Endothelial cell of umbilical vein (primary cell): ENCODE measurements at regions of chr13 and their contacts with region 1.

Region 1: GRCh38 chr13:27953676-27954405 is 15.3 kb downstream of the CDX2 start:
- DNase-seq: peak; percentile 64
- H3K4me3 ChIP-seq: peak overlapping the region; percentile 27 to 52 (median 32)
- H3K27ac ChIP-seq: no peak overlapping the region
- H3K4me1 ChIP-seq: peaks cover 15% of the 10 kb centered on the region
- H3K27me3 ChIP-seq: peaks cover 36 to 67% of the 10 kb centered on the region in 2 experiments
- CTCF ChIP-seq: peak; percentile 89 to 95
- POLR2A ChIP-seq: no peak

Region 2: GRCh38 chr13:27374650-27375049 is 579.2 kb before region 1 on chr13:
- CTCF ChIA-PET with region 1: interaction called, 17 read pairs
- POLR2A ChIA-PET with region 1: no interaction called
- dilution Hi-C with region 1: no loop called
- intact Hi-C with region 1: loop called (anchors 10 kb)
- DNase-seq: peak; percentile 73
- H3K4me3 ChIP-seq: no peak overlapping the region
- H3K27ac ChIP-seq: no peak overlapping the region
- H3K4me1 ChIP-seq: no peaks in the 10 kb centered on the region
- H3K27me3 ChIP-seq: peaks cover 6 to 10% of the 10 kb centered on the region in 2 experiments
- CTCF ChIP-seq: peak; percentile 67 to 75
- POLR2A ChIP-seq: no peak

Region 3: DNA sequence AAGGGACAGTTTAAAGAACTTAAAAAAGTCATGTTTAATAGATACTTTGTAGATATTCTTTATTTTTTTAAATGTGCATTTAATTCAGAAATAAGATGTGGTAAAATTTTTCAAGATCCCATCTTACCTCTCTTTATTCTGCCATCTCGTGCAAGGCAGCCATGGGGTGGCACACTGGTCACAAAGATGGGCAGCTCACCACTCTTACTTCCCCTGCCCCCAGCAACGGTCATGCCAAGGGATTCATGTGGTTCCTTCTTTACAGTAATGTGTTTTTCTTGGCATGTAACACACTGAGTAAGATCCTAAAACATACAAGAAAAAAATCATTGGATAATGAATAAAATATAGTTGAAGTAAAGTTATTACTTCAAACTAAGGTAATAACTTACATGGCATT is 397.7 kb before region 1 on chr13:
- CTCF ChIA-PET with region 1: interaction called, 9 read pairs
- POLR2A ChIA-PET with region 1: no interaction called
- dilution Hi-C with region 1: no loop called
- intact Hi-C with region 1: loop called (anchors 1 kb)
- DNase-seq: peak; percentile 93
- H3K4me3 ChIP-seq: no peak overlapping the region
- H3K27ac ChIP-seq: no peak overlapping the region
- H3K4me1 ChIP-seq: peaks cover 9% of the 10 kb centered on the region
- H3K27me3 ChIP-seq: no peaks in the 10 kb centered on the region
- CTCF ChIP-seq: peak; percentile 26 to 53
- POLR2A ChIP-seq: no peak

Region 4: DNA sequence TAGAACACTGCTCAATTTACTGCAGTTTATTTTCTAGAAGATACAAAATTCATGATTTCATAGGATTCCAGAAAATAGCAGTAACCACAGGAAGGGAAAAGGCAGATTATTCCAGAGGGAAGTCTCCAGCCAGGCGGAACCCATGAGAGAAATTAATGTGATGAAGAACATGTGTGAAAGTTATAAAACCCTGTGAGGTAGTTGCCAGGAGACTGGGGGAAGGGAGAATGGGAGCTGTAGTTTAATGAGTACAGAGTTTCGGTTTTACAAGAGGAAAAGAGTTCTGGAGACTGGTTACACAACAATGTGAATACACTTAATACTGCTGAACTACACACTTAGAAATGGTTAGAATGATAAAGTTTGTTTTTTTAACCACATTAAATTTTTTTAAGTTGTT is 48.2 kb before region 1 on chr13:
- CTCF ChIA-PET with region 1: no interaction called
- POLR2A ChIA-PET with region 1: no interaction called
- dilution Hi-C with region 1: no loop called
- intact Hi-C with region 1: no loop called
- DNase-seq: no peak
- H3K4me3 ChIP-seq: no peak overlapping the region
- H3K27ac ChIP-seq: no peak overlapping the region
- H3K4me1 ChIP-seq: no peaks in the 10 kb centered on the region
- H3K27me3 ChIP-seq: peaks cover 7 to 12% of the 10 kb centered on the region in 2 experiments
- CTCF ChIP-seq: no peak
- POLR2A ChIP-seq: no peak

Region 5: GRCh38 chr13:27919934-27920676 is 33.7 kb before region 1 on chr13 and contains the start of gene PDX1:
- CTCF ChIA-PET with region 1: interaction called, 16 read pairs
- POLR2A ChIA-PET with region 1: no interaction called
- dilution Hi-C with region 1: no loop called
- intact Hi-C with region 1: no loop called
- DNase-seq: no peak
- H3K4me3 ChIP-seq: peak within 1 kb of the TSS in 1 of 3 experiments; percentile 13
- H3K27ac ChIP-seq: no peak within 1 kb of the TSS
- H3K4me1 ChIP-seq: peaks cover 7% of the 10 kb centered on the region
- H3K27me3 ChIP-seq: peaks cover 84 to 98% of the 10 kb centered on the region in 2 experiments
- CTCF ChIP-seq: no peak
- POLR2A ChIP-seq: no peak
- total RNA-seq, gene PDX1: not detected in 2 replicates

Region 6: GRCh38 chr13:27980280-27980998 is 26.6 kb after region 1 on chr13:
- CTCF ChIA-PET with region 1: interaction called, 25 read pairs
- POLR2A ChIA-PET with region 1: no interaction called
- dilution Hi-C with region 1: no loop called
- intact Hi-C with region 1: loop called (anchors 1 kb)
- DNase-seq: no peak
- H3K4me3 ChIP-seq: no peak overlapping the region
- H3K27ac ChIP-seq: no peak overlapping the region
- H3K4me1 ChIP-seq: no peaks in the 10 kb centered on the region
- H3K27me3 ChIP-seq: peaks cover 64 to 74% of the 10 kb centered on the region in 2 experiments
- CTCF ChIP-seq: no peak
- POLR2A ChIP-seq: no peak

Region 7: DNA sequence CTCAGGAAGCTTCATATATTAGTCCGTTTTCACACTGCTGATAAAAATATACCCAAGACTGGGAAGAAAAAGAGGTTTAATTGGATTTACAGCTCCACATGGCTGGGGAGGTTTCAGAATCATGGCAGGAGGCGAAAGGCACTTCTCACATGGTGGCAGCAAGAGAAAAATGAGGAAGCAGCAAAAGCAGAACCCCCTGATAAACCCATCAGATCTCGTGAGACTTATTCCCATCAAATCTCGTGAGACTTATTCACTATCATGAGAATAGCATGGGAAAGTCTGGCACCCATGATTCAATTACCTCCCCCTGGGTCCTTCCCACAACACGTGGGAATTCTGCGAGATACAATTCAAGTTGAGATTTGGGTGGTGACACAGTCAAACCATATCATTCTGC is 123.4 kb after region 1 on chr13:
- CTCF ChIA-PET with region 1: no interaction called
- POLR2A ChIA-PET with region 1: no interaction called
- dilution Hi-C with region 1: no loop called
- intact Hi-C with region 1: no loop called
- DNase-seq: no peak
- H3K4me3 ChIP-seq: no peak overlapping the region
- H3K27ac ChIP-seq: no peak overlapping the region
- H3K4me1 ChIP-seq: no peaks in the 10 kb centered on the region
- H3K27me3 ChIP-seq: peaks cover 0 to 3% of the 10 kb centered on the region in 2 experiments
- CTCF ChIP-seq: no peak
- POLR2A ChIP-seq: no peak